Endothelial cell of umbilical vein (primary cell): ENCODE measurements at regions of chr3 and their contacts with region 1.

Region 1: GRCh38 chr3:54853573-54854404 is 74.1 kb downstream of the LRTM1 start:
- DNase-seq: peak; percentile 38
- H3K4me3 ChIP-seq: no peak overlapping the region
- H3K27ac ChIP-seq: no peak overlapping the region
- H3K4me1 ChIP-seq: no peaks in the 10 kb centered on the region
- H3K27me3 ChIP-seq: no peaks in the 10 kb centered on the region
- CTCF ChIP-seq: peak; percentile 71 to 87
- POLR2A ChIP-seq: no peak

Region 2: GRCh38 chr3:53938645-53939044 is 915.1 kb before region 1 on chr3:
- CTCF ChIA-PET with region 1: interaction called, 13 read pairs
- POLR2A ChIA-PET with region 1: no interaction called
- dilution Hi-C with region 1: no loop called
- intact Hi-C with region 1: no loop called
- DNase-seq: peak; percentile 39
- H3K4me3 ChIP-seq: no peak overlapping the region
- H3K27ac ChIP-seq: no peak overlapping the region
- H3K4me1 ChIP-seq: no peaks in the 10 kb centered on the region
- H3K27me3 ChIP-seq: no peaks in the 10 kb centered on the region
- CTCF ChIP-seq: peak; percentile 51 to 52
- POLR2A ChIP-seq: no peak

Region 3: DNA sequence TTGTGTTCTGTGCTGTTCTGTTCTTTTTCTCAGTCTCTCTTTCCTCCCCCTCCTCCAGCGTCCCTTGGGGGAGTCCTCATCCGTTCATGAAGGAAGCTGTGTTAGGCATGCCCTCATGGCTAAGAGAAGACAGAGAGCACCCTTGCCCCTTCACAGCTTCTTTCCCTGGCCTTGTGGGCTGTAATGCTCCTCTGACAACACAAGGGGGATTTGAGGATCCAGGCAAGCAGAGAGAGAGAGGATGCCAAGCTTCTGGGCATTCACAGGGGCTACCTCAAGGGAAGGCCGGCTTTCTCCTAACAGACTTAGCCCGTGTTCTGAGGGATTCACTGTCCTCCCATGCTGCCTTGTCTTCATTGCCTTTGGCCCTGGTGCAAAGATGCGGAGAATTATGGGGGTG is 315.4 kb before region 1 on chr3:
- CTCF ChIA-PET with region 1: no interaction called
- POLR2A ChIA-PET with region 1: no interaction called
- dilution Hi-C with region 1: no loop called
- intact Hi-C with region 1: no loop called
- DNase-seq: no peak
- H3K4me3 ChIP-seq: no peak overlapping the region
- H3K27ac ChIP-seq: no peak overlapping the region
- H3K4me1 ChIP-seq: no peaks in the 10 kb centered on the region
- H3K27me3 ChIP-seq: no peaks in the 10 kb centered on the region
- CTCF ChIP-seq: no peak
- POLR2A ChIP-seq: no peak

Region 4: DNA sequence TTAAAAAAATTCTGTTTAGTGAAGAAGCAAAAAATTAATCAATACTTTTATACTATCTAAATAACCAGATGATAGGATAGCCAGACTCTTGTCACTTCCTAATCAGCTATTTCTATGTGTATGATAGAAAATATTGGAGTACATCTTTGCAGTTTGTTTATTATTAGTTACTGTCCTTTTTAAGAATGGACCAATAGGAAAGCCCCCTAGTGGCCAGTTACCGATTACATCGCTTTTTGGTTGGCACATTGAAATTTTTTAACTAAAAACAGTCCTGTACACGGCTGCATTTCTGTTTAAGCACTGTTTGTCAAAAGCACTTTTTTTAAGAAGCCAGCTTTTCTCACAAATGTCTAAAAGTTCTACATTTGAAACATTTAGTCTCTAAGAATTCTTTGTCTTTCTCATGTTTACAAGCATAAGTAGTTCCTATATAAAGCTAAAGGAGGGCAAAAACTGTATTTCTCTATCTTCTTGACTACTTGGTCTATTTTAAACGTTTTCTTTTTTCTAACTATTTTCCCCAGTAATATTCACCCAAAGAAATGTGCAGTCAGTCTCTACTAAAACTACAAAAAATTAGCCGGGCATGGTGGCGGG is 327.2 kb after region 1 on chr3:
- CTCF ChIA-PET with region 1: no interaction called
- POLR2A ChIA-PET with region 1: no interaction called
- dilution Hi-C with region 1: no loop called
- intact Hi-C with region 1: loop called (anchors 2 kb)
- DNase-seq: peak; percentile 12
- H3K4me3 ChIP-seq: no peak overlapping the region
- H3K27ac ChIP-seq: no peak overlapping the region
- H3K4me1 ChIP-seq: no peaks in the 10 kb centered on the region
- H3K27me3 ChIP-seq: no peaks in the 10 kb centered on the region
- CTCF ChIP-seq: peak; percentile 39 to 52
- POLR2A ChIP-seq: no peak

Region 5: GRCh38 chr3:55721716-55722484 is 868.1 kb after region 1 on chr3:
- CTCF ChIA-PET with region 1: interaction called, 4 read pairs
- POLR2A ChIA-PET with region 1: no interaction called
- dilution Hi-C with region 1: no loop called
- intact Hi-C with region 1: loop called (anchors 10 kb)
- DNase-seq: no peak
- H3K4me3 ChIP-seq: no peak overlapping the region
- H3K27ac ChIP-seq: no peak overlapping the region
- H3K4me1 ChIP-seq: no peaks in the 10 kb centered on the region
- H3K27me3 ChIP-seq: no peaks in the 10 kb centered on the region
- CTCF ChIP-seq: no peak
- POLR2A ChIP-seq: no peak

Region 6: DNA sequence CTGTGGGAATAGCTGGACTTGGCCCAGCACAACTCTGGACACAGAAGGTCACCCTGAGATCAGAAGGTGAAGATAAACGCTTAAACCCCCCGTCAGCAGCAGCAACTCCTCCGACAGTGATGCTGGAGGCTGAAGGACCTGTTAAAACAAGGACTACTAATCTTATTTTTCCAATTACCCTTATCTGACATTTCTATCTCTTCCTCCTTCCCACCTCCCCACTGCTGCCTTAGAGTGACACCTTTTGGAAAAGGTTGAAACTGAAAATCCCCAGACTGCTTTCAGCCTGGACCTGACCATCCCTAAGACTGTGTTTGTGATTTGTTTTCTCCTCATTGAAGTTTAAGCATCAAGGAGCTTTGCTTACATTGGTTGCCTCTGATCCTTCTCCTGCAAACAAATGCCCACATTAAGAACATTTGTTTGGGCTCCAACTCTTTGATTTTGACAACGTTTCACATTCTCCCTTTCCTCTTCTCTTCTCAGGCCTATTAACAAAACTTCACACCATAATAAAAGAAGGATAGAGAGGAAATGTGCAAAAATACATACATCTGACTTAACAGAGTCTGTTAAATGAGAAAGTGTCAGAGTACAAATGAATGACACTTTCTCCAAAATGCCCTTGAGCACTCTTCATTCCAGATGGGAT is 1043.9 kb after region 1 on chr3:
- CTCF ChIA-PET with region 1: interaction called, 4 read pairs
- POLR2A ChIA-PET with region 1: no interaction called
- dilution Hi-C with region 1: no loop called
- intact Hi-C with region 1: loop called (anchors 10 kb)
- DNase-seq: peak; percentile 34
- H3K4me3 ChIP-seq: no peak overlapping the region
- H3K27ac ChIP-seq: no peak overlapping the region
- H3K4me1 ChIP-seq: peaks cover 12% of the 10 kb centered on the region
- H3K27me3 ChIP-seq: no peaks in the 10 kb centered on the region
- CTCF ChIP-seq: peak; percentile 10 to 13
- POLR2A ChIP-seq: no peak

Region 7: GRCh38 chr3:56453011-56453410 is 1599.2 kb after region 1 on chr3:
- CTCF ChIA-PET with region 1: no interaction called
- POLR2A ChIA-PET with region 1: no interaction called
- dilution Hi-C with region 1: no loop called
- intact Hi-C with region 1: loop called (anchors 5 kb)
- DNase-seq: no peak
- H3K4me3 ChIP-seq: no peak overlapping the region
- H3K27ac ChIP-seq: no peak overlapping the region
- H3K4me1 ChIP-seq: no peaks in the 10 kb centered on the region
- H3K27me3 ChIP-seq: no peaks in the 10 kb centered on the region
- CTCF ChIP-seq: no peak
- POLR2A ChIP-seq: no peak